Activated T-helper 2 cell treated with anti-CD3 and anti-CD28 coated beads, Interferon-gamma antibody, Interleukin-2, Interleukin-4, amounts not matched to agents 10 μg/mL and 5 μg/mL and 100 μg/mL, durations not matched to agents 14 hours and 24 hours and 36 hours (primary cell): ENCODE measurements at regions of chr10 and their contacts with region 1.

Region 1: DNA sequence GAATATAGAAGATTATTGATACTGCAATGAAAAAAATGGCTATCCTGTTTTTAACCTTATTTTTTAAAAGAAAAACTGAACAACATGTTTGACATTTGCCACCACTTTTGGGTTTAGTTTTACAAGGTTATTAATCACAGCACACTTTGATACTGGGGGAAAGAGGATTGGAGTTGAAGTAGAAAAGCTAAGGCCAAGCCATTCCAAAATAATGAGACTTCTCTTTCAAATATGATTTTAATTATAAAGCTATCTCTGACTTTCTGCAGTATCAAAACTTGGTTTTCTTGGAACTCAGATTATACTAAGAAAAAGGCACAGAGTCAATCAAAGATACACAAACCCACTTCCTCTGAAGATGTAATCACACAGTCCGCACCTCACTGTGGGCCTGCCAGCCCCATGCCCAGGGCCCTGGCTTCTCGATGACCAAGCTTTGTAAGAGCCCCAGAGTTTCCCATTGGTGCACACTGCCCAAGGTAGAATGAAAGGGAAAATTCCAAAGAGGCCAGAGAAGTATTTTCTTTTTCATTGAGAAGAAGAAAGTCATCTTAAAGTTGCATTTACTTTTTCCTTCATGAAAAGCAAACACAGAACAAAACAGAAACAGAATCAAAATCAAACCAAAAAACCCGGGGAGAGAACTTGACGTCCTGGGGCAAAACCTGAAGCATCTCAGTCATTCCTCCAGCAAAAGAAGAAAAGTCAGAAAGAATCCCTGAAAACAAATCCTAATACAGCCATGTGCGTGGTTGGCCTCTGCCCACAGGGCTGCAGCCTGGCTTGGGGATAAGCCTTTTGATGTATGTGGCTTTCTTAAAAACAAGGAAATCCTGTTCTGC is 187.7 kb upstream of the KLF6 start:
- DNase-seq: no peak
- H3K4me3 Mint-ChIP-seq: peak overlapping the region; percentile 68
- H3K27ac Mint-ChIP-seq: peak overlapping the region; percentile 95
- H3K4me1 Mint-ChIP-seq: peaks cover 42% of the 10 kb centered on the region
- H3K27me3 Mint-ChIP-seq: no peaks in the 10 kb centered on the region

Region 2: GRCh38 chr10:3720228-3721019 is 252.3 kb before region 1 on chr10:
- intact Hi-C with region 1: no loop called
- DNase-seq: no peak
- H3K4me3 Mint-ChIP-seq: no peak overlapping the region
- H3K27ac Mint-ChIP-seq: no peak overlapping the region
- H3K4me1 Mint-ChIP-seq: no peaks in the 10 kb centered on the region
- H3K27me3 Mint-ChIP-seq: peaks cover 27% of the 10 kb centered on the region

Region 3: DNA sequence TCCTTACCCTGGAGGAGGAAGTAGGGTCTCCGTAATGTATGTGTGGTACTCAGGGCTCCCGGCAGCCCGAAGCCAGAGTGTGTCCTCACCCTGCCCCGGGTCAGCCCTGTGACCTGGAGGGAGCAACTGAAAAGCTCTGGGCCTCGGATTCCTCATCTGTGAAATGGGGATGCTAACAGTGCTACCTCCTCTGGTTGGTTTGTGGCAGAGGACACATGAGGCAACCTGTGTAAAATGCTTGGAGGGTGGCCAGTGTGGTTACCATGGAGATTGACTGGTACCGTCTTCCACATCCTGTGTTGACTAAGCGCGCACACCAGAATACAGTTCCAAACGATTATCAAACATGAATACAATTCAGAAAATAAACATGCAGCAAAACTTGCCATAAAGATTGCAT is 23.8 kb before region 1 on chr10:
- intact Hi-C with region 1: loop called (anchors 2 kb)
- DNase-seq: peak; percentile 71
- H3K4me3 Mint-ChIP-seq: peak overlapping the region; percentile 45
- H3K27ac Mint-ChIP-seq: peak overlapping the region; percentile 79
- H3K4me1 Mint-ChIP-seq: peaks cover 50% of the 10 kb centered on the region
- H3K27me3 Mint-ChIP-seq: no peaks in the 10 kb centered on the region

Region 4: GRCh38 chr10:4013651-4014121 is 41.0 kb after region 1 on chr10:
- intact Hi-C with region 1: loop called (anchors 5 kb)
- DNase-seq: no peak
- H3K4me3 Mint-ChIP-seq: no peak overlapping the region
- H3K27ac Mint-ChIP-seq: peak overlapping the region; percentile 40
- H3K4me1 Mint-ChIP-seq: peaks cover 31% of the 10 kb centered on the region
- H3K27me3 Mint-ChIP-seq: no peaks in the 10 kb centered on the region

Region 5: DNA sequence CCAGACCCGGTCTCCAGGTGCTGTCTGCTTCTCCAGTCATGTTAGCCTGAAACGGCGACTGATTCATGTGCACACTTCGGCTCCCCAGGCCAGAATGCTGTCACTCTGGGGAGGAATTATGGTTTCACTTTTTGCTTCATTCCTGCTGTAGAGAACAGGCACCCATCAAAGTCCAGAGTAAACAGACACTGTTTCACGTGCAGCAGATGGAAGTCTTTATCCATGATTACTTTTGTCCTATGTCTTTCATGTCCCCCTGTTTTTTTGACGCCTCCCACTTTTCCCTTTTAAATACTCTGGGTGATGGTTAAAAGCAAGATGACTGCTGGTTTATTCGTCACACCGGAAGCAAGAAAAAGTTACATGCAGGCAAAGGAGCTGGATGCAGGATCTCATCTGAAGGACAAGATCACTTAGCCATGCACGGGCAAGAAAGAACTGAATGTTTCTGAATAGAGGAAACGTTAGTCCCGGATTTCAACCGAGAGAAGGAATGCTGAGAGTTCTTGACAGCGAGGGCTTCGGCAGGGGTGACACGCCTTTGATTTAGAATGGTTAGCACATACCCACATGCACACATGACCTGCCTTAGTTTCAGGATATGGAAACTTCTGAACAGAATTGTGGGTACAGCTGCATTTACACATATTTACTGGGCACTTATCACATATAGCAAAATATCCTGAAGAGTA is 62.4 kb after region 1 on chr10:
- intact Hi-C with region 1: loop called (anchors 2 kb)
- DNase-seq: peak; percentile 15
- H3K4me3 Mint-ChIP-seq: peak overlapping the region; percentile 61
- H3K27ac Mint-ChIP-seq: peak overlapping the region; percentile 84
- H3K4me1 Mint-ChIP-seq: peaks cover 36% of the 10 kb centered on the region
- H3K27me3 Mint-ChIP-seq: peaks cover 2% of the 10 kb centered on the region

Region 6: GRCh38 chr10:4067531-4067930 is 94.8 kb after region 1 on chr10:
- intact Hi-C with region 1: loop called (anchors 2 kb)
- DNase-seq: no peak
- H3K4me3 Mint-ChIP-seq: no peak overlapping the region
- H3K27ac Mint-ChIP-seq: no peak overlapping the region
- H3K4me1 Mint-ChIP-seq: peaks cover 17% of the 10 kb centered on the region
- H3K27me3 Mint-ChIP-seq: no peaks in the 10 kb centered on the region